ENCODE measurements at regions of chr14 and their contacts with region 1.

Region 1: DNA sequence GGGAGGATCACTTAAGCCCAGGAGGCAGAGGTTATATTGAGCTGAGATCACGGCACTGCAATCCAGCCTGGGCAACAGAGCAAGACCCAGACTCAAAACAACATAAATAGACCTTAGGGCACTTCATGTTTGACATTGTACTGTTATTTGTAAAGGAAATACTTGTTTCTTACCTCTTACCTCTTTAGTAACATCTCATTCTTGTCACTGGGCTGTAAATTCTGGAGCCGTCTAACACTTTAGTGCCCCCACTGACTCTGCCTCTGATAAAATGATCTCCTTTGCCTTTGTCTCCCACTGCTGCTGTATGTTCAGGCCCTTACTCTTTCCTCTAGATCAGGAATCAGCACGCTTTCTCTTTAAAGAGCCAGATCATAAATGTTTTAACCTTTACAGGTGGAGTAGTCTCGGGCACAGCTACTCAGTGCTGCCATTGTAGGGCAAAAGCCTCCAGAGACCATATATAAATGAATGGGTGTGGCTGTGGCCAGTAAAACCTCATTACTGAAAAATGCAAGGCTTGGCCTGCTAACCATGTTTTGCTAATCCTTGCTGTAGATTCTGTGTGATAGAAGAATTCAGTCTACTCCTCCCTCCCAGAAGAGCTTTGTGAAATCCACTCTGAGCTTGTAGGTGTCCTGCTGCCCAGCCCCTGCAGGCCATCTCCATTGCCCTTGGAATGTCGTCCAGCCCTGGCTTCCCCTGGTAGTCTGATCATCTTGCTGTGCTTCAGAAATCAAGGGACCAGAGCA is 58.2 kb downstream of the HSP90AA1 start:
- DNase-seq: peak; percentile 91 to 100
- H3K4me3 ChIP-seq: peak overlapping the region; percentile 24; the same call in 1 of the 2 replicates
- H3K27ac ChIP-seq: peak overlapping the region; percentile 92
- H3K4me1 ChIP-seq: peaks cover 46% of the 10 kb centered on the region
- H3K27me3 ChIP-seq: no peaks in the 10 kb centered on the region
- CTCF ChIP-seq: no peak; the same call in 1 of the 2 replicates

Region 2: GRCh38 chr14:101731187-101732080 is 297.2 kb before region 1 on chr14:
- CTCF ChIA-PET with region 1: no interaction called
- POLR2A ChIA-PET with region 1: no interaction called
- intact Hi-C with region 1: loop called (anchors 1 kb)
- DNase-seq: peak; percentile 98 to 100
- H3K4me3 ChIP-seq: peak overlapping the region; percentile 54
- H3K27ac ChIP-seq: peak overlapping the region; percentile 92
- H3K4me1 ChIP-seq: peaks cover 50% of the 10 kb centered on the region
- H3K27me3 ChIP-seq: no peaks in the 10 kb centered on the region
- CTCF ChIP-seq: no peak

Region 3: DNA sequence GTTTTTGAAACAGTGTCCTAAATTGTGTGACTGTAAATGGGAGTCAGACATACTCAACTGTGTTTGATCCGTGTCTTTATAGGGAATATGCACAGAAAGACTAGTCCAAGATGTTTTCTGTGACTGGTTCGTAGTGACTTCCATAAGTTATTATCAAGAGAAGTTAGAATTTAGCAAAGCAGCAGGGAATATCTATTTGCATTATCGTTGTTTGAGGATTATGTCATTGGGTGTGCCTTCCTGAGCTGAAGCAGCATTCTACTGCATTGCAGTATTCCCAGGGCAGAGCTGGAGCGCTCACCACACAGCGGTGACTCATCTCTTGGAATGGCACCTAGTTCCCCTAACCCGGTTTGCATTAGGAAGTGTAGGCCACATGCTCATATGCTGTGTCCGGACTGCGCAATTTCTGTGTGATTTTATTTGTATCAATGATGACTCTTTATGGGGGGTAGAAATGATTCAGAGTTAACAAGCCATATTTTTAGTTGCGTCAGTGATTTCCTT is 56.3 kb before region 1 on chr14:
- CTCF ChIA-PET with region 1: interaction called, 3 read pairs
- POLR2A ChIA-PET with region 1: interaction called, 6 read pairs
- intact Hi-C with region 1: loop called (anchors 2 kb)
- DNase-seq: peak; percentile 96 to 100
- H3K4me3 ChIP-seq: peak overlapping the region; percentile 47; the same call in 1 of the 2 replicates
- H3K27ac ChIP-seq: peak overlapping the region; percentile 96
- H3K4me1 ChIP-seq: peaks cover 72% of the 10 kb centered on the region
- H3K27me3 ChIP-seq: no peaks in the 10 kb centered on the region
- CTCF ChIP-seq: no peak

Region 4: GRCh38 chr14:102013669-102014200 is 14.9 kb before region 1 on chr14:
- CTCF ChIA-PET with region 1: interaction called, 12 read pairs
- POLR2A ChIA-PET with region 1: interaction called, 6 read pairs
- intact Hi-C with region 1: no loop called
- DNase-seq: no peak
- H3K4me3 ChIP-seq: no peak overlapping the region
- H3K27ac ChIP-seq: no peak overlapping the region
- H3K4me1 ChIP-seq: peaks cover 3% of the 10 kb centered on the region
- H3K27me3 ChIP-seq: no peaks in the 10 kb centered on the region
- CTCF ChIP-seq: no peak

Region 5: GRCh38 chr14:102071283-102071998 is 42.8 kb after region 1 on chr14:
- CTCF ChIA-PET with region 1: no interaction called
- POLR2A ChIA-PET with region 1: interaction called, 3 read pairs
- intact Hi-C with region 1: loop called (anchors 2 kb)
- DNase-seq: peak; percentile 66 to 100
- H3K4me3 ChIP-seq: peak overlapping the region; percentile 7; the same call in 1 of the 2 replicates
- H3K27ac ChIP-seq: peak overlapping the region; percentile 91
- H3K4me1 ChIP-seq: peaks cover 34% of the 10 kb centered on the region
- H3K27me3 ChIP-seq: no peaks in the 10 kb centered on the region
- CTCF ChIP-seq: 0 out of 2 replicates have a peak, but pooled peaks have one; percentile 28